ENCODE measurements at regions of chr10 and their contacts with region 1.

Region 1: DNA sequence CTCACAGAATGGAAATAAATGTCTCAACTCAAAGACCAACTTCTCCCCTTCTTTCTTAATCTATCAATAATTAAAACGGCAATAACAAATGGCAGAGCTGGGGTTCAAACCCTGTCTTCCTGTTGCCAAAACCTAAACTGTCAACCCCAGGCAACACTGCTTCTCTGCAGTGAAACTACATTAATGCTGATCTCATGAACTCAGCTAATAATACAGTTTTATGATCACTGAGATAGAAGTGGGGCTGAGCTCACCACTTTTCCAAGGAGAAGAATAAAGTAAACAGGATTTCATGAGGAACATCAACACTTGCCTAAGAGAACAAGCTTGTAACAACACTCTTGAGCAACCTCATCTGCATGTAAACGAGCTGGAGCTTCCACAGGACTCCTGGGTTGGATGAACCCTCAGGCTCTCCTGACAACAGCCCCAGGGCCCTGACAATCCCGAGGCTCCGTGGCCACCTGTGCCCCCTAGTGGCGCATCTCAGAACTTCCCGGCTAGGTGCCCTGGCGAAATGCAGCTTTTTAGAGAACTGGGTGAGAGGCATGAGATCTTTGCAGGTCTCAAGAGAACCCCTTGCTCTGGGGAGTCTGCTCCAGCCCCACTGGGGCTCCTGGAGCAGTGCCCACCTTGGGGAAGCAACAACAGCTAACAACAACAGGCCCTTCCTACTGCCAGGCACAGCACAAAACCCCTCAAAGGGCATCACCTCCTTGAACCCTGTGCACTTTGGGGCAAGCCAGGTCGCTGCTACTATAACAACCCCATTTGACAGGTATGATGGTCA is 169.3 kb downstream of the SH3PXD2A start:
- DNase-seq: peak; percentile 56 to 81 (median 76)
- ATAC-seq: peak; percentile 98
- H3K4me3 ChIP-seq: no peak overlapping the region
- H3K4me3 Mint-ChIP-seq: no peak overlapping the region
- H3K27ac ChIP-seq: no peak overlapping the region
- H3K27ac Mint-ChIP-seq: no peak overlapping the region
- H3K4me1 ChIP-seq: no peaks in the 10 kb centered on the region
- H3K4me1 Mint-ChIP-seq: no peaks in the 10 kb centered on the region
- H3K27me3 ChIP-seq: no peaks in the 10 kb centered on the region
- H3K27me3 Mint-ChIP-seq: no peaks in the 10 kb centered on the region
- CTCF ChIP-seq: peak; percentile 94

Region 2: DNA sequence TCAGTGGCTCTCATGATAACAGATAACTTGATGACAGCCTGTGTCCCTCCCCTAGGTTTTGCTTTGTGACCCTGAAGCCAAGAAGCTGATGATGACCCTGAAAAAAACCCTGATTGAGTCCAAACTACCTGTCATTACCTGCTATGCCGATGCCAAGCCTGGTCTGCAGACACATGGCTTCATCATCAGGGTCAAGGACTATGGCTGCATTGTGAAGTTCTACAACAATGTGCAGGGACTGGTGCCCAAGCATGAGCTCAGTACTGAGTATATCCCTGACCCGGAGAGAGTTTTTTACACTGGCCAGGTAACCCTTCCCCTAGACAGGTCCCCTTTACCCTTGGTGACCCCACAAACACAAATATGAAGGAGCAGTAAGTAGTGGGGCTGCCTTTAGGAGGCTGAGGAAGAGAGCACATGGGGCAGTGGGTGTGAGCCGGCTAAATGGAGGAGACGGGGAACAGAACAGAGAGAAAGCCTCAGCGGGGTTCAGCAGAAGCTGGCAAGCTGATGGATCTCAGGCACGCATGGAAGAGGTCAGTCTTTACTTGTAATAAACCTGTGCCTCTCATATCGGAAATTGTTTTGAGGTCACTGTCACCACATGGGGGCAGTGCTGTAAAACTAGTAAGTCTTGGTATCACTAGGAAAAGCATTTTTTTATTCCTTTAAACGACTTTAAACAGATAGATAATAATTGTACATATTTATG is 269.5 kb before region 1 on chr10:
- CTCF ChIA-PET with region 1: interaction called, 5 read pairs
- POLR2A ChIA-PET with region 1: no interaction called
- intact Hi-C with region 1: loop called in 1 of 2 experiments (anchors 1 kb)
- DNase-seq: peak; percentile 31 to 81 (median 70)
- ATAC-seq: peak; percentile 40
- H3K4me3 ChIP-seq: no peak overlapping the region
- H3K4me3 Mint-ChIP-seq: no peak overlapping the region
- H3K27ac ChIP-seq: no peak overlapping the region
- H3K27ac Mint-ChIP-seq: no peak overlapping the region
- H3K4me1 ChIP-seq: no peaks in the 10 kb centered on the region
- H3K4me1 Mint-ChIP-seq: peaks cover 3% of the 10 kb centered on the region
- H3K27me3 ChIP-seq: no peaks in the 10 kb centered on the region
- H3K27me3 Mint-ChIP-seq: no peaks in the 10 kb centered on the region
- CTCF ChIP-seq: peak; percentile 75

Region 3: DNA sequence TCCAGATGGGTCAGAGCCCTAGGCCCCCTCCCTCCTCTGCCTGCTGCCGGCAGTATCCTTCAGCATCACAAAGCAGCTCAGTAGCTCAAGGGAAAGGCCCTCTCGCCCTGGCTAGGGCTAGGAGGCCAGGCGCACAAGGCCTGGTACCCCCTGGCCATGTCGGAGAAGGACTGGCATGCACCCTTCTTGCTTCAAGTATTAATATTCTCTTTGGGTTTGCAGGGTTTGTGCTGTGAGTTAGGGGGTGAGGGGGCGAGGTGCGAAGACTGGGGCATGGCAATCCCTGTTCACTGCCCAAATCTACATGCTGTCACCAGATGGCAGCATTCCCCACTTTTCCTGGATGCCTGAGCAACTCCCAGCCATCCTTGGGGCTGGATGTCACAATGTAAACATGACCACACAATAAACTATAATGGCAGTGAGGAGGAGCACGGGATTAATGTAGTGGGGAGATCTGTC is 87.4 kb before region 1 on chr10:
- CTCF ChIA-PET with region 1: interaction called, 80 read pairs
- POLR2A ChIA-PET with region 1: no interaction called
- intact Hi-C with region 1: no loop called
- DNase-seq: peak in 1 of 9 experiments; percentile 36
- ATAC-seq: no peak
- H3K4me3 ChIP-seq: no peak overlapping the region
- H3K4me3 Mint-ChIP-seq: no peak overlapping the region
- H3K27ac ChIP-seq: no peak overlapping the region
- H3K27ac Mint-ChIP-seq: no peak overlapping the region
- H3K4me1 ChIP-seq: no peaks in the 10 kb centered on the region
- H3K4me1 Mint-ChIP-seq: no peaks in the 10 kb centered on the region
- H3K27me3 ChIP-seq: no peaks in the 10 kb centered on the region
- H3K27me3 Mint-ChIP-seq: no peaks in the 10 kb centered on the region
- CTCF ChIP-seq: no peak

Region 4: GRCh38 chr10:103612462-103613365 is 73.4 kb before region 1 on chr10:
- CTCF ChIA-PET with region 1: interaction called, 12 read pairs
- POLR2A ChIA-PET with region 1: no interaction called
- intact Hi-C with region 1: no loop called
- DNase-seq: no peak
- ATAC-seq: no peak
- H3K4me3 ChIP-seq: no peak overlapping the region
- H3K4me3 Mint-ChIP-seq: no peak overlapping the region
- H3K27ac ChIP-seq: no peak overlapping the region
- H3K27ac Mint-ChIP-seq: no peak overlapping the region
- H3K4me1 ChIP-seq: no peaks in the 10 kb centered on the region
- H3K4me1 Mint-ChIP-seq: no peaks in the 10 kb centered on the region
- H3K27me3 ChIP-seq: no peaks in the 10 kb centered on the region
- H3K27me3 Mint-ChIP-seq: no peaks in the 10 kb centered on the region
- CTCF ChIP-seq: no peak

Region 5: GRCh38 chr10:103666087-103666761 is 19.9 kb before region 1 on chr10:
- CTCF ChIA-PET with region 1: interaction called, 16 read pairs
- POLR2A ChIA-PET with region 1: interaction called, 3 read pairs
- intact Hi-C with region 1: no loop called
- DNase-seq: peak in 1 of 9 experiments; percentile 31
- ATAC-seq: no peak
- H3K4me3 ChIP-seq: no peak overlapping the region
- H3K4me3 Mint-ChIP-seq: no peak overlapping the region
- H3K27ac ChIP-seq: no peak overlapping the region
- H3K27ac Mint-ChIP-seq: peak overlapping the region; percentile 39
- H3K4me1 ChIP-seq: peaks cover 16% of the 10 kb centered on the region
- H3K4me1 Mint-ChIP-seq: peaks cover 18% of the 10 kb centered on the region
- H3K27me3 ChIP-seq: no peaks in the 10 kb centered on the region
- H3K27me3 Mint-ChIP-seq: no peaks in the 10 kb centered on the region
- CTCF ChIP-seq: no peak

Region 6: GRCh38 chr10:103696411-103697145 is 10.5 kb after region 1 on chr10:
- CTCF ChIA-PET with region 1: interaction called, 23 read pairs
- POLR2A ChIA-PET with region 1: no interaction called
- intact Hi-C with region 1: no loop called
- DNase-seq: peak; percentile 15 to 73 (median 63)
- ATAC-seq: peak; percentile 70
- H3K4me3 ChIP-seq: no peak overlapping the region
- H3K4me3 Mint-ChIP-seq: peak overlapping the region; percentile 23
- H3K27ac ChIP-seq: no peak overlapping the region
- H3K27ac Mint-ChIP-seq: peak overlapping the region; percentile 85
- H3K4me1 ChIP-seq: peaks cover 26% of the 10 kb centered on the region
- H3K4me1 Mint-ChIP-seq: peaks cover 22% of the 10 kb centered on the region
- H3K27me3 ChIP-seq: no peaks in the 10 kb centered on the region
- H3K27me3 Mint-ChIP-seq: peaks cover 5% of the 10 kb centered on the region
- CTCF ChIP-seq: no peak